OCI-LY7 (cell line): ENCODE measurements at regions of chr3 and their contacts with region 1.

Region 1: DNA sequence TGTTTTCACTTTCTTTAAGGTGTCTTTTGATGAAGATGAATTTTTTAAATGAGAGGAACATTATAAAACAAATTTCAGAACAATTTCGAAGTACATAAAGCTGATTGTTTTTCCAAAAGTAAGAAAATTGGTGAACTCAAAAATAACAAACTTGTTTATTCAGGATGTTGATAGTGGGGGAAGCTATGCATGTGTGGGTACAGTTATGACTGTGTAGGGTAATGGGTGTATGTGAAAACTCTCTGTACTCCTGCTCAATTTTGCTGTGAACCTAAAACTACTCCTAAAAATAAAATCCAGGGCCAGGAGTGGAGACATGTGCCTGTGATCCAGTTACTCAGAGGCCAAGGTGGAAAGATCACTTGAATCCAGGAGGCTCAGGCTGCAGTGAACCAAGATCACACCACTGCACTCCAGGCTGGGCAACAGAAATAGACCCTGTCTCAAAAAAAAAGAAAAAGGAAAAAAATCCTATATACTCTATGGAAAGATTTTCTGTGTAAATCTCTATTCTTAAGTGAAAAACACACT is 37.2 kb downstream of the PIK3CB start:
- DNase-seq: no peak
- H3K4me3 ChIP-seq: no peak overlapping the region
- H3K27ac ChIP-seq: no peak overlapping the region
- H3K4me1 ChIP-seq: no peaks in the 10 kb centered on the region
- CTCF ChIP-seq: no peak

Region 2: GRCh38 chr3:138786788-138787278 is 10.7 kb before region 1 on chr3:
- CTCF ChIA-PET with region 1: no interaction called
- POLR2A ChIA-PET with region 1: interaction called, 12 read pairs
- intact Hi-C with region 1: no loop called
- DNase-seq: no peak
- H3K4me3 ChIP-seq: no peak overlapping the region
- H3K27ac ChIP-seq: no peak overlapping the region
- H3K4me1 ChIP-seq: no peaks in the 10 kb centered on the region
- CTCF ChIP-seq: no peak